H1 (cell line): ENCODE measurements at regions of chr14 and their contacts with region 1.

Region 1: DNA sequence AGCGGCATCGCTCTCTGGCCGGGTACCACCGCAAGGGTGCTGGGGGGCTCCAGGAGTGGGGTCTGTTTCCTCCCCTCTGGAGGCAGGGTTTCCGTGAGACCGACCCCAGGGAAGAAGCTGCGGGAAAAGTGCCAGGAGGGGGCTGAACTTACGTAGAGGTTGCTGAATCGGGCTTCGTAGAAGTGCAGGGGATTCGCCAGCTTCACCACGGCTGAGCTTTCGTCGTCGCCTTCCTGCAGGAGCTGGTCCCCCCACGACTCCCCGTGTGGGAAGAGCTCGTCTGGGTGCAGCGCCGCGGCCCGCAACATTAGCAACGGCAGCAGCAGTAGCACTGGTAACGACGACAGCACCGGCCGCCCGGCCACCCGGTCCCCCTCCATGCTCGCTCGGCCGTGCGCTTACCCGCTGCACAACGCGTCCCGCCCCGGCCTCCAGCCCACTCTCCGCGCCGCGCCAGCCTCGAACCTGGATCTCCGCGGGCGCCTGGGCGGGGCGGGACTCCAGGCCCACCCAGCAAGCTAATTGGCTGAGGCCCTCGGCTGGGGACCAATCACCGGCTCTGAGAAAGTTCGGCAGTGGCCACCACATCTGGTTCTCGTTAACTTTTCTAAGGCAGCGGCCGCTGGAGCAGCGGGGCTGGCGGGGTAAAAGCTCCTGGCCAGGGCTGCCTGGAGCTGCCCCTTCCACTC is at the start of gene NID2:
- DNase-seq: peak; percentile 63 to 92
- H3K4me3 ChIP-seq: peak within 1 kb of the TSS; percentile 47 to 84 (median 76)
- H3K27ac ChIP-seq: no peak within 1 kb of the TSS
- H3K4me1 ChIP-seq: peaks cover 0 to 6% (median under 1%) of the 10 kb centered on the region in 4 experiments; a peak in 2 of 7 replicates
- H3K27me3 ChIP-seq: peaks cover 5 to 35% (median 30%) of the 10 kb centered on the region in 4 experiments
- CTCF ChIP-seq: no peak
- EP300 ChIP-seq: no peak
- POLR2A ChIP-seq: no peak; a peak in 1 of 3 replicates
- RAD21 ChIP-seq: no peak
- total RNA-seq, gene NID2: 6.1 and 6.9 TPM in 2 replicates

Region 2: DNA sequence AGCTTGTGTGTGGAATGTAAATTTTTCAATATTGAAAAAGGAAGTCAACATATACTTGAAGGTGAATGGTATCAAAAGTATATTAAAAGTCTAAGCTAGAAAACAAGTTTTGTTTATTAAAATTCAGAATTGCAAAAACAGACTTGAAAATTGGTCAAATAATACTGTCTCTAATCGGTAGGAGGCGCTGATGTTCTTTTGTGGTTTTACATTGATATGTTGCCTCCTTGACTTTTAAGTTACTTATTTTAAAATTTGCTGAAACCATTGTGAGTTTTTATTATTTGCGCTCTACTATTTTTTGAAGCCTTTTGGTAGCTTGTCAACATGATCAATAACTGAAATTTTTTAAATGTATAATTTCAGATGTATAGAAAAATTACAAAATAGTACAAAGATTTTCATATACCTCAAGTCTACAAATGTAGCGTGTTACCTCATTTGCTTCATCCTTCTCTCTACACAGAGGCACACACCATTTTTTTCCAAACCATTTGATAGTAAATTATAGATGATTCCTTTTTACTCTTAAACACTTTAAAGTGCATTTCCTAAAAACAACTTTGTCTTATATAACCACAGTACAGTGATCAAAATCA is 72.5 kb before region 1 on chr14:
- CTCF ChIA-PET with region 1: interaction called, 16 read pairs
- POLR2A ChIA-PET with region 1: no interaction called
- DNase-seq: no peak
- H3K4me3 ChIP-seq: no peak overlapping the region
- H3K27ac ChIP-seq: no peak overlapping the region
- H3K4me1 ChIP-seq: no peaks in the 10 kb centered on the region
- H3K27me3 ChIP-seq: no peaks in the 10 kb centered on the region
- CTCF ChIP-seq: peak in 2 of 3 experiments; percentile 21 to 48; a peak in 2 of 4 replicates
- EP300 ChIP-seq: no peak
- POLR2A ChIP-seq: no peak
- RAD21 ChIP-seq: peak; percentile 57 to 66

Region 3: DNA sequence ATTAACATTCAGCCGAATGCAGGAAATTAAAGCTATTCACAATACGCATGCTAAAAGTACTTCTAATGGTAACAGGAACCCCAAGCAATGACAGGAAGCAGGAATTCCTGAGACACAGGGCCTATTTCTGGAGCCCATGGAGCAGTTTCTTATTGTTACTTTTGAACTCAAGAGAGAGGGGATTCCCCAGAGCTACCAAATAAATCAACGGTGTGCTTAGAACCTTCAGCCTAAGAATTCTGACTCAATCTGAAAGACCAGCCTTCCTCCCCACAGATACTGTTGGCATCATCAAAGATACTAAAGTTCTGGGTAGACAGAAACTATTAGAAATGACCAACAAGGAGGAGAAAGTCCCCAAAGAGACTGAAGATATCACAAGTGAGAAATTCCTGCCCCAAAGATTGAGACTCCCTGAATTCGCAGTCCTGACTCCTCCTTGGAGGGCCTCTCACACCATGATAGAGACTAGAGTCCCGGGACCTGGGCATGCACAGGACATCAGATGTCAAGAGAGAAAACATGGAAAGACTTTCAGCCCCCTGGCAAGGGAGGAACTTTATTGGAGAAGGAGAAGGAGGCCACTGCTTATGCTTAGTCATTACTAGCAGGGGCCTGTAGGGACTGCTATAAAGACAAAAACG is 46.7 kb before region 1 on chr14:
- CTCF ChIA-PET with region 1: interaction called, 46 read pairs
- POLR2A ChIA-PET with region 1: no interaction called
- DNase-seq: no peak
- H3K4me3 ChIP-seq: no peak overlapping the region
- H3K27ac ChIP-seq: no peak overlapping the region
- H3K4me1 ChIP-seq: peaks cover 0 to 7% (median 4%) of the 10 kb centered on the region in 4 experiments; a peak in 2 of 7 replicates
- H3K27me3 ChIP-seq: no peaks in the 10 kb centered on the region
- CTCF ChIP-seq: no peak
- EP300 ChIP-seq: no peak
- POLR2A ChIP-seq: no peak
- RAD21 ChIP-seq: no peak

Region 4: DNA sequence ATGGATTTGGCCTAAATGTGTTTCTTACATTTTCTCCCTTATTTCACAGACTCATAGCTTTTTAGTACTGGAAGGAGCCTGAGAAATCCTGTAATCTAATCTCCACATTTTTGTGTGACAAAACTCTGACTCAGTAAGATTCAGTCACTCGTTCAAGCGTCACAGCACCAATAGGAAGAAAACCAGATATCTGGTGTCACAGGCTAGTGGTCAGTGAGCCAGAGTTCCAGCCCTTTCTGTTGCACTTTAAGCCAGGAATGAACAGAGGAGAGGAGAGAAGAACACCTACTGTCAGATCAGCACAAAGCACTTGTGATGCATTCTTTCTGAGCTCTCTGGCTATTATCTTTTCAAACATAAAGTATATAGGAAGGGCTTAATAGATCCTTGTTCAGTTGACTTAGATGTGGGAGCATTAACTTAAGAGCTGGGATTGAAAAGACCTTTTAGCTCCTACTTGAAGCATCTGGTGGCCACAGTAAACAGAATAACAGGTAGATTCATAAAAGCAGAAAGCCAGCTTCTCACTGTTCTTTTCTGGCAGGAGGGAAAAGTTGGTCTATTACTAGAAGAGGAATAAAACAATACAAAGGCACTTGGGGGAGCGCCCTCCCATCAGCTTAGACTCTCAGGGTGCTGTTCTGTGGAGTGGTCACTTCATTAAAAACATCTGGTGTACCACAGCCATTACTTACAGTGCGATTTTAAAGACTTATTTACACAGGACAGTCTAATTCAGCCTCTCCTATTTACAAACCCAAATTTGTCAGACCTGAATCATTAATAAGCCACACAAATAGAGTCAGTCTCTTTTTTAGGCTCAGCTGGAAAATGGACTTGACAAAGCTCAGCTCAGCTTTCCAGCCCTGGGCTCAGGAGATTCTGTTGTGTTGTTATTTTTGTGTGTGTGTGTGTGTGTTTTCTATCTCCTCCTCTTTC is 12.3 kb after region 1 on chr14:
- CTCF ChIA-PET with region 1: interaction called, 70 read pairs
- POLR2A ChIA-PET with region 1: interaction called, 3 read pairs
- DNase-seq: no peak
- H3K4me3 ChIP-seq: no peak overlapping the region
- H3K27ac ChIP-seq: no peak overlapping the region
- H3K4me1 ChIP-seq: no peaks in the 10 kb centered on the region
- H3K27me3 ChIP-seq: no peaks in the 10 kb centered on the region
- CTCF ChIP-seq: no peak
- EP300 ChIP-seq: no peak
- POLR2A ChIP-seq: no peak
- RAD21 ChIP-seq: no peak

Region 5: DNA sequence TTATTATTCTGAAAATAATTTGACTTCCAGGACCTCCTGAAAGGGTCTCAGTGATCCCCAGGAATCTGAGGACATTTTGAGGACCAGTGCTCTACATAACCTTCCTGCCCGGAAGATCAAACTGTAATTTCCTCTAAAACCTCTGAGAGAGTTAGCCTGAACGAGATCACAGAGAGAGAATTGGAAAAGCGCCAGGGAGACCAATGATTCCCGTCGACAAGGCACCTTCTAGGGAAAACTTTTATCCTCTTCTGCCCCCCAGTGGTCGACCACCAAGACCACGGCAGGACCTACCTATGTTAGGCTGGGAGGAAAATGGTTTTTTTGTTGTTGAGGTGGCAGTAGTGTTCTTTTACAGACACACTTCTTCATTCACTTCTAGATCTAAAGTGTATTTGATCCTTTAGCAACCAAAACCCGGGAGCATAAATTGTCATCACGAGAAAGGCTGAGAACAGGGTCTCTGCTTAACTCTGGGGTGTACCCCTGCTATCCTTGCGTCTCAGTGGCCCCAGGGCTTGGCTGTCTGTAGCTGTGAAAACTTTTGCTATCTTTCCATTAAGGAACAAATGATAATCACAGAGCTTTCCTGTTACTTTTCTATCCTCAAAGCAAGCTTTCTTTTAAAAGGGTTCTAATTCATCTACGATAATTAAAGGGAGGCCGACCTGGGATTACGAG is 63.0 kb after region 1 on chr14:
- CTCF ChIA-PET with region 1: interaction called, 46 read pairs
- POLR2A ChIA-PET with region 1: interaction called, 4 read pairs
- DNase-seq: peak; percentile 62 to 84
- H3K4me3 ChIP-seq: no peak overlapping the region
- H3K27ac ChIP-seq: no peak overlapping the region
- H3K4me1 ChIP-seq: no peaks in the 10 kb centered on the region
- H3K27me3 ChIP-seq: no peaks in the 10 kb centered on the region
- CTCF ChIP-seq: peak; percentile 68 to 86 (median 85)
- EP300 ChIP-seq: no peak
- POLR2A ChIP-seq: no peak
- RAD21 ChIP-seq: peak; percentile 93 to 95

Region 6: GRCh38 chr14:52235866-52236510 is 167.2 kb after region 1 on chr14:
- CTCF ChIA-PET with region 1: no interaction called
- POLR2A ChIA-PET with region 1: no interaction called
- DNase-seq: no peak
- H3K4me3 ChIP-seq: no peak overlapping the region
- H3K27ac ChIP-seq: no peak overlapping the region
- H3K4me1 ChIP-seq: peaks cover 0 to 4% (median 0%) of the 10 kb centered on the region in 4 experiments; a peak in 3 of 7 replicates
- H3K27me3 ChIP-seq: no peaks in the 10 kb centered on the region
- CTCF ChIP-seq: no peak
- EP300 ChIP-seq: no peak
- POLR2A ChIP-seq: no peak
- RAD21 ChIP-seq: no peak